CD8-positive, alpha-beta T cell (primary cell): ENCODE measurements at regions of chr1 and their contacts with region 1.

Region 1: DNA sequence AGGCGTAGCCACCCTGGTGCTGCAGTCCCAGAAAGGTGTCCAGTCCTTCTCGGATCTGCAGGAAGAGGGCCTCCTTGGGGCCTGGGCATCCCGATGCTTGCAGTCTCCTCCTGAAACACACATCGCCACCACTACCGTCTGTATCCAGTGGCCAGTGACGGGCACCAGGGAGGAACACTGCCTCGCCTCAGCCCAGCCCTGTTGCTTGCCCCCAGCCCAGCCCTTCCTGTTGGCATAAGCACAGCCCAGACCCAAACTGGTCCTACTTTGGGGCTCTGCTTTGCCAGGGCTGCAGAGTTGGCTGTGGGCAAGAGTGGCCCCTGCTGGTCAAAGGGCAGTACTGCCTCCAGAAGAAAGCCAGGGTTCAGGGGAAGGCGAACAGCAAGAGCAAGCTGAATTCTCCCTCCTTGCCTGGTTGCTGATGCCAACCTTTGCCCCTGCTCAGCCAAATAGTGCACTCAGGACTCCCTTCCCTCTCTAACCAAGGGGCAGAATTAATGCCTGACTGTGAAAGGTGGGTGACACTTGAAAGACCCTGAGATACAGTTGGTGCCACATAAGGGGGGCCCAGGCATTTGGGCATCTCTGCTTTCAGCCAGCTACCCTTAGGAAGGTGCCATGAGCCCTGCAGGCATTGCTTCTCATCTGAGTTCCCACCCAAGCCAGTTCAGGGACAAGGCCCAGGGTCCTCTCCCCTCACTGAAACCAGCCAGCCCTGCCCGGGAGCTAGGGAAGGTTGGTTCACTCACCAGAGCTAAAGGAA is 11.1 kb upstream of the ARHGEF2 start:
- DNase-seq: peak; percentile 64 to 89 (median 78)
- ATAC-seq: peak; percentile 100
- H3K4me3 ChIP-seq: no peak overlapping the region
- H3K4me3 Mint-ChIP-seq: no peak overlapping the region
- H3K27ac ChIP-seq: no peak overlapping the region
- H3K27ac Mint-ChIP-seq: no peak overlapping the region
- H3K4me1 ChIP-seq: peaks cover 7% of the 10 kb centered on the region
- H3K4me1 Mint-ChIP-seq: peaks cover 9% of the 10 kb centered on the region
- H3K27me3 ChIP-seq: no peaks in the 10 kb centered on the region
- H3K27me3 Mint-ChIP-seq: no peaks in the 10 kb centered on the region
- CTCF ChIP-seq: peak; percentile 97

Region 2: GRCh38 chr1:155934097-155934935 is 55.1 kb before region 1 on chr1 and contains the start of gene KHDC4:
- CTCF ChIA-PET with region 1: interaction called, 74 read pairs
- POLR2A ChIA-PET with region 1: interaction called, 11 read pairs
- intact Hi-C with region 1: loop called (anchors 1 kb)
- DNase-seq: peak; percentile 88 to 100 (median 93)
- ATAC-seq: peak; percentile 92
- H3K4me3 ChIP-seq: peak within 1 kb of the TSS; percentile 83 to 96
- H3K4me3 Mint-ChIP-seq: no peak within 1 kb of the TSS
- H3K27ac ChIP-seq: peak within 1 kb of the TSS; percentile 89 to 98
- H3K27ac Mint-ChIP-seq: no peak within 1 kb of the TSS
- H3K4me1 ChIP-seq: peaks cover 39% of the 10 kb centered on the region
- H3K4me1 Mint-ChIP-seq: peaks cover 34% of the 10 kb centered on the region
- H3K27me3 ChIP-seq: no peaks in the 10 kb centered on the region
- H3K27me3 Mint-ChIP-seq: no peaks in the 10 kb centered on the region
- CTCF ChIP-seq: peak; percentile 32
- total RNA-seq, gene KHDC4: 47.4 to 54.6 TPM

Region 3: GRCh38 chr1:155946633-155947219 is 42.7 kb before region 1 on chr1:
- CTCF ChIA-PET with region 1: interaction called, 13 read pairs
- POLR2A ChIA-PET with region 1: interaction called, 3 read pairs
- intact Hi-C with region 1: no loop called
- DNase-seq: peak in 2 of 9 experiments; percentile 30 to 49
- ATAC-seq: no peak
- H3K4me3 ChIP-seq: no peak overlapping the region
- H3K4me3 Mint-ChIP-seq: no peak overlapping the region
- H3K27ac ChIP-seq: peak overlapping the region; percentile 44 to 81
- H3K27ac Mint-ChIP-seq: peak overlapping the region; percentile 95
- H3K4me1 ChIP-seq: peaks cover 31% of the 10 kb centered on the region
- H3K4me1 Mint-ChIP-seq: peaks cover 39% of the 10 kb centered on the region
- H3K27me3 ChIP-seq: no peaks in the 10 kb centered on the region
- H3K27me3 Mint-ChIP-seq: no peaks in the 10 kb centered on the region
- CTCF ChIP-seq: no peak

Region 4: GRCh38 chr1:155970531-155971167 is 18.8 kb before region 1 on chr1:
- CTCF ChIA-PET with region 1: interaction called, 57 read pairs
- POLR2A ChIA-PET with region 1: interaction called, 10 read pairs
- intact Hi-C with region 1: loop called (anchors 1 kb)
- DNase-seq: peak in 1 of 9 experiments; percentile 52
- ATAC-seq: peak; percentile 41
- H3K4me3 ChIP-seq: no peak overlapping the region
- H3K4me3 Mint-ChIP-seq: peak overlapping the region; percentile 59
- H3K27ac ChIP-seq: peak overlapping the region in 1 of 2 experiments; percentile 68
- H3K27ac Mint-ChIP-seq: peak overlapping the region; percentile 94
- H3K4me1 ChIP-seq: peaks cover 97% of the 10 kb centered on the region
- H3K4me1 Mint-ChIP-seq: peaks cover 95% of the 10 kb centered on the region
- H3K27me3 ChIP-seq: no peaks in the 10 kb centered on the region
- H3K27me3 Mint-ChIP-seq: no peaks in the 10 kb centered on the region
- CTCF ChIP-seq: no peak

Region 5: GRCh38 chr1:157639800-157640199 is 1650.4 kb after region 1 on chr1:
- CTCF ChIA-PET with region 1: no interaction called
- POLR2A ChIA-PET with region 1: no interaction called
- intact Hi-C with region 1: no loop called
- DNase-seq: no peak
- ATAC-seq: no peak
- H3K4me3 ChIP-seq: no peak overlapping the region
- H3K4me3 Mint-ChIP-seq: no peak overlapping the region
- H3K27ac ChIP-seq: no peak overlapping the region
- H3K27ac Mint-ChIP-seq: no peak overlapping the region
- H3K4me1 ChIP-seq: no peaks in the 10 kb centered on the region
- H3K4me1 Mint-ChIP-seq: no peaks in the 10 kb centered on the region
- H3K27me3 ChIP-seq: no peaks in the 10 kb centered on the region
- H3K27me3 Mint-ChIP-seq: no peaks in the 10 kb centered on the region
- CTCF ChIP-seq: no peak